Prostate gland (tissue), 2 donors: ENCODE measurements at regions of chr1 and their contacts with region 1.

Region 1: DNA sequence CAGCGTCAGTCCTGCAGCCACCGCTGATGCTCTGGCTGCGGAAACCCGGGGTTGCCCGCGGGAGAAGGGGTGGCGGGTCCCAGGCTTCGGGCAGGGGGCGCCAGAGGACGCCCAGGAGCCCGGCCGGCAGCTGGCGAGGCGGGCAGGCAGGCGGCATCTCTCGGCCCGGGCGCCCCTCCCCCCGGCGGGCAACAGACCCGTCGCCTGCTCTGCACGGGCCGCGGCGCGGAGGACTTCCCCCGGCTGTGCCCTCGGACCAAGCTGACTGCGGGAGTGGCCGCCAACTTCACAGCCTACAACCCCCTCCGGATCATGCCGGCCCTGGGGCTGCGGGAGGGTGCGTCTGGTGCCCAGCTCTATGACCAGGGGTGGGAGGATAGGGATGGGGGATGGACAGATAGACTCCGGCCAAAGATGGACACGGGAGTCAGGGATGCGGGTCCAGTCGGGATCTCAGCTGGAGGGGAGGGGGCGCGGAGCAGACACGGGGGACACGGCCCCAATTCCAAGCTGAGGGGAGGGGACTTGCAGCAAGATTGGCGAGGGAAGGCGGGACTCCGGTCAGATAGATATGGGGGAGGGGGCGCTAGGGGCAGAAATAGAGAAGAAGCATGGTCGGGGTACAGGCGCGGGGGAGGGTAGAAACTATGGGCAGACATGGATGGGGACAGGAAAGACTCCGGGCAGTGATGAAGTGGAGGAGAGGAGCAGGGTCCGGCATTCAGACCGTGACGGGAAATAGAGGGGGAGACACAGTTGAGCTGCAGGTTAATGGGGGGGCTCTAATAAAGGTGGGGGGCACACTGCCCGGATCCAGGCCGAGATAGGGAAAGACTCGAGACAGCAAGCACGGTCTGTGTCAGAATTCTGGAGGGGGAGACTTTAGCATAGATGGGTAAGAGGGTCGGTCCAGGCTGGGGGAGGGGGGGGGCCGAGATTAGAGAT is 1.1 kb downstream of the ADGRB2 start:
- DNase-seq: peak; percentile 68
- H3K4me3 ChIP-seq: peak overlapping the region; percentile 37 to 48
- H3K27ac ChIP-seq: no peak overlapping the region
- H3K4me1 ChIP-seq: peaks cover 4% of the 10 kb centered on the region
- H3K27me3 ChIP-seq: no peaks in the 10 kb centered on the region
- CTCF ChIP-seq: peak; percentile 48 to 89 (median 70)
- POLR2A ChIP-seq: no peak

Region 2: GRCh38 chr1:31959521-31960340 is 196.7 kb after region 1 on chr1:
- intact Hi-C with region 1: loop called (anchors 2 kb)
- DNase-seq: no peak
- H3K4me3 ChIP-seq: no peak overlapping the region
- H3K27ac ChIP-seq: no peak overlapping the region
- H3K4me1 ChIP-seq: no peaks in the 10 kb centered on the region
- H3K27me3 ChIP-seq: no peaks in the 10 kb centered on the region
- CTCF ChIP-seq: no peak
- POLR2A ChIP-seq: no peak

Region 3: GRCh38 chr1:32063261-32063681 is 300.3 kb after region 1 on chr1:
- intact Hi-C with region 1: loop called (anchors 10 kb)
- DNase-seq: no peak
- H3K4me3 ChIP-seq: no peak overlapping the region
- H3K27ac ChIP-seq: peak overlapping the region; percentile 15 to 31
- H3K4me1 ChIP-seq: peaks cover 5% of the 10 kb centered on the region
- H3K27me3 ChIP-seq: no peaks in the 10 kb centered on the region
- CTCF ChIP-seq: peak in 3 of 4 experiments; percentile 36 to 76 (median 67)
- POLR2A ChIP-seq: no peak